ENCODE measurements at regions of chr3 and their contacts with region 1.

Region 1: DNA sequence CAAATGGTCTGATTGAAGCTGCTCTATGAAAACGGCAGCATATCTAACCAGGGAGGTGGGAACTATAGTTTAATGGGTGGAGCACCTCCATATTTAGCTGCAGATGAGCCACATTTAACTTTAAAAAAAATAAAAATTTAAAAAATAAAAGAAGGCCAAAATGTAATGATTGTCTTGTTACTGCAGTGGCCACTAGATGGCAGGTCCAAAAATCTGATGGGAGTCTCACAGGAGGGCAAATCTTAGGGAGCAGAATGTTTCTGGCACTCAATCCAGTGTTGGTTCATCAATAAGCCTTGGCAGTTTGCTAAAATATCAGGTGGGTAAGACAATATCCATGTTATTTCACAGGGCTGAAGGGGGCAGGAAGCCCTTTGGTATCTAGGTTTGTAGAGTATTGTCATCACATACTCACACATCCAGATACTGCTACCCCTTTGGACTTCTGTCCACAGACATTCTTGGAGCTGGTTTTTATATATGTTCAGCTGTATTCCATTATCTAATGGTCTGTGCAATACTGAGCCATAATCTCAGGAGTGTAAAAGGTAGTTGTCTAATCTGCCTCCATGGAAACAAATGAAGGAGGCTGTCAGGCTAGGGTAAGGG is 233.3 kb downstream of the TIGIT start:
- DNase-seq: no peak
- ATAC-seq: peak; percentile 70
- H3K4me3 ChIP-seq: no peak overlapping the region
- H3K27ac ChIP-seq: no peak overlapping the region
- H3K4me1 ChIP-seq: no peaks in the 10 kb centered on the region
- H3K27me3 ChIP-seq: no peaks in the 10 kb centered on the region
- CTCF ChIP-seq: peak; percentile 39 to 65 (median 57); a peak in 5 of 6 replicates
- EP300 ChIP-seq: no peak
- POLR2A ChIP-seq: no peak
- RAD21 ChIP-seq: peak; percentile 61

Region 2: GRCh38 chr3:114809668-114810413 is 282.7 kb after region 1 on chr3:
- CTCF ChIA-PET with region 1: no interaction called
- POLR2A ChIA-PET with region 1: no interaction called
- RAD21 ChIA-PET with region 1: no interaction called
- SMC1A ChIA-PET with region 1: no interaction called
- in situ Hi-C with region 1: no loop called
- intact Hi-C with region 1: loop called (anchors 10 kb)
- DNase-seq: peak; percentile 79
- ATAC-seq: peak; percentile 99
- H3K4me3 ChIP-seq: peak overlapping the region; percentile 31; the same call in 1 of the 2 replicates
- H3K27ac ChIP-seq: peak overlapping the region; percentile 45
- H3K4me1 ChIP-seq: peaks cover 6% of the 10 kb centered on the region
- H3K27me3 ChIP-seq: no peaks in the 10 kb centered on the region
- CTCF ChIP-seq: no peak
- EP300 ChIP-seq: peak in 1 of 2 experiments; percentile 74; a peak in 2 of 4 replicates
- POLR2A ChIP-seq: no peak
- RAD21 ChIP-seq: no peak

Region 3: DNA sequence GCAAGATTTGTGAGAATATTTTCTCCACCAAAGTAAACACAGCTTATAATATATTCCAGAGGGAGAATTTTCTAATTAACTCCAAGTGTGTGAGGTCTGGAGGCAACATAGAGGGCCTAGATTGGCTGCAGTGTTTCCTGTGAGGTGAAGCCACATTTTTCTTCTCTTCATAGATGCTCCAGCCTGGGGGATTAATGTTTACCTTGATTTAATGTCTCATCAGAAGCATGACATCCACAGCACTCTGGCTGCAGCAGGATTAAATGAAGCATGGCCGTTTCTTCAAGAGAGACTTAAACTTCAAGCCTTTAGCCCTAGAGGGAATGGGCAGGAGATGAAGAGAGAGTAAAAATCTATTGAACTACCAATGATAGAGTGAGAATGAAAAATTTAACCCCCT is 757.8 kb after region 1 on chr3:
- CTCF ChIA-PET with region 1: no interaction called
- POLR2A ChIA-PET with region 1: no interaction called
- RAD21 ChIA-PET with region 1: no interaction called
- SMC1A ChIA-PET with region 1: no interaction called
- in situ Hi-C with region 1: no loop called
- intact Hi-C with region 1: no loop called
- DNase-seq: no peak
- ATAC-seq: no peak
- H3K4me3 ChIP-seq: no peak overlapping the region
- H3K27ac ChIP-seq: no peak overlapping the region
- H3K4me1 ChIP-seq: no peaks in the 10 kb centered on the region
- H3K27me3 ChIP-seq: no peaks in the 10 kb centered on the region
- CTCF ChIP-seq: no peak
- EP300 ChIP-seq: no peak
- POLR2A ChIP-seq: no peak
- RAD21 ChIP-seq: no peak